HEK293 (cell line): ENCODE measurements at regions of chr1 and their contacts with region 1.

Region 1: DNA sequence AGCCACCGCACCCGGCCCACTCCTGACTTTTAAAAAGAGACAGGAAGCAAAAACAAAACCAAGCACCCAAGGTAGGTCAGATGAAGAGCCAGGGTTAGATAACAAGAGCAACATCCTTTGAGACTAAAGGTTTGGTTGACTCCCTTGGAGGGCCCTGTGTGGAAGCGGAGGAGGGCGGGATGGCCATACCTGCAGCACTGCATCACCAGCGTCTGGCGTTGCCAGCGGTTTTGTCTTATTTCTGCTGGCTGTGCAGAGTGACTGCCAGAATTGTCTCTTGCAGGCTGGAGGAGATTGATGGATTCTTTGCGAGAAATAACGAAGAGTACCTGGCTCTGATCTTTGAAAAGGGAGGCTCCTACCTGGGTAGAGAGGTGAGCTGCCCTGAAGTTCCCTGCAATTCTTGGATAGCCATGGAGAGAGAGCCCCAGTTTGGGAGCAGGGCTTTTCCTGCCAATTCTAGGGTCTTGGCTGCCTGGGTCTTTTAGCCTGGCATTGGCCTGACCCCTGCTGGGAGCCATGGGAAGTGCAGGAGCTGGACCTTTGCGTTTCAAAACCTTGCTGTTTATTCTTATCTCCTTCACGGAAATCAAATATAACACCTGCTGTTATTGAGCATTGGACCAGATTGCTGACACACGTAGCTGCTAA is 24.0 kb downstream of the QSOX1 start:
- H3K4me3 ChIP-seq: no peak overlapping the region
- H3K27ac ChIP-seq: no peak overlapping the region
- H3K4me1 ChIP-seq: no peaks in the 10 kb centered on the region
- CTCF ChIP-seq: peak; percentile 55

Region 2: DNA sequence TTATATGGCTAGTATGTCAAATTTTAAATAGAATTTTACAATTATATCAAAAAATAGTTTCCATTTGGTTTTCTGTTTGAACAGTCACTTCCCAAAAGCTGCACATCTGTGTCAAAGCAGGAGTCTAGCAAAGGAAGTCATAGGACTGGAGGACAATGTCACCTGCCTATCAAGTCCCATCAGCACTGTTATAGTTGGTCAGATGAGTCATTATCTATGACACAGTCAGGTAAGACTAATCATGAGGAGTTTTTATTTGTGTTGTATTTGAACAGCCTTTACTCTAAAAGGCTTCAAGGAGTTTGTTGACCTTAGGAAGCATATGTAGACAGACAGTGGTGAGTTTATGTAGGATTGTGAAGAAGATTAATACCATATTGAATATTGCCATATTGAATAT is 98.2 kb before region 1 on chr1:
- CTCF ChIA-PET with region 1: interaction called, 17 read pairs
- POLR2A ChIA-PET with region 1: no interaction called
- H3K4me3 ChIP-seq: no peak overlapping the region
- H3K27ac ChIP-seq: no peak overlapping the region
- H3K4me1 ChIP-seq: no peaks in the 10 kb centered on the region
- CTCF ChIP-seq: no peak